GM13977 (cell line): ENCODE measurements at regions of chr9 and their contacts with region 1.

Region 1: DNA sequence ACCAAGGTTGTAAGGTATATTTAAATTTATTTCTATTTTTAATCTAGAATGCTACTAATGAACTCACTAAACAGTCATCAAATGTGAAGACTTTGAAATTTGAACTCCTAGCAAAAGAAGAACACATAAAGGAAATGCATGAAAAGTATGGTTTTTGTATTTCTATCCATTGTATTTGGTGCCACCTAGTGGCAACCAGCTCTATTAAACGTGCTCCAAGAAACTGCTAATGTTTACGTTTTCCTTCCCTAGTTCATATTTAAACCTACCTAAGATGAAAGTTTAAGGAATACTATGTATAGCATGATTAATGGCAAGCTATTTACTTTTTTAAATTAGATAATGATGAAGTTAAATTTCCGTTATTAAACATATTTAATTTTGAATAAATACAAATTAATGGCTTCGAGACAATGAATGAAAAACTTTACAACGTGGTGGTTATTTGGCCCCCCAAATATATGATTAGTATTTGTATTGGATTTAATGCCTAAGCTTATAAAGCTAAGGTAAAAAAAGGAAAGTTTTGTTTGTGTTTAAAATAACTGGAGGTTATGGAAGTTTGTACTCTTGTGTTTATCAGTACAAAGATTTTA is 115.9 kb upstream of the SH3GL2 start:
- DNase-seq: peak; percentile 20
- CTCF ChIP-seq: peak; percentile 74

Region 2: GRCh38 chr9:17121264-17121663 is 341.7 kb before region 1 on chr9:
- in situ Hi-C with region 1: loop called (anchors 10 kb)
- DNase-seq: no peak
- CTCF ChIP-seq: no peak

Region 3: DNA sequence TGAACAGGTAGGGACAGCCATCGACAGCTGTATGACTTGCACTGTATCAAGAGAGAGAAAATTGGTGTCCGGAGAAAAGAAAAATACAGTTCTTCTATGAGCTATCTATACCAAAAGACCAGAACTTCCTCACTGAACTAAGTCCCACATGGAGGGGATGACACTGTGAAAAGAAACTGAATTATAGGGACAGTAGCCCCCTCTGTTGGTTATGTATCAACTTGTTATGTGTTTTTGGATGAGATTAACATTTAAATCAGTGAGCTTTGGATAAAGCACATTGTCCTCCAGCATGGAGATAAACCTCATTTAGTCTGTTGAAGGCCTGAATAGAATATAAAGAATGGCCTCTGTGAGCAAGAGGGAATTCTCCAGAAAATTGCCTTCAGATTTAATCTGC is 60.7 kb before region 1 on chr9:
- in situ Hi-C with region 1: no loop called
- DNase-seq: no peak
- CTCF ChIP-seq: peak; percentile 19

Region 4: DNA sequence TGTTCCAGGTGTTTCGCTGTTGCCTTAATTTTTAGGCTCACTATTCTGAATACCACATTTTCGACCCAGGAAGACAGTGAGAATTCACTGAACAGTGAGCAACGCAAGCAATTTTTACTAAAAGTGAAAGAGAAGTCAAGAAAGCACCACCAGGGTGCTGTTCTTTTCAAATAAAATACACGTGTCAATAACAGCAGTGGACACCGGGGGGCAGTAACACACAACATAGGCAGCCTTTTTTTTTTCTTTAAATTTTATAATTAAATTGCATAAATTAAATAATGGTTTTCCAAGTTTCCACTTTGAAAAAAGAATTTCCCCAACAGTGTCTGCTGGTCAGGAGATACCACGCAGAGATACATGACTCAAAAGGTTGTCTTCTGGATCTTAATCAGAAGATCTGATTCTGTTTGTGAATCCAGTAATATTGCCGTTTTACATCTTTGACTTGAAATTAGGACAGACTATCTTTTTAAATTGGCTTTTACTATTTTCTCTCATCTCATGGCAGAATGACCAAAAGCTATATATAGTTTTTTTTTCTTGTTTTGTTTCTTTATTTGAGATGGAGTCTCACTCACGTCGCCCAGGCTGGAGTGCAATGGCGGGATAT is 68.8 kb after region 1 on chr9:
- in situ Hi-C with region 1: no loop called
- DNase-seq: peak; percentile 59
- CTCF ChIP-seq: peak; percentile 69